ENCODE measurements at regions of chr1 and their contacts with region 1.

Region 1: GRCh38 chr1:204398217-204399081 is 13.2 kb downstream of the PPP1R15B start:
- DNase-seq: peak; percentile 67 to 78 (median 71)
- H3K4me3 ChIP-seq: no peak overlapping the region
- H3K4me3 Mint-ChIP-seq: no peak overlapping the region
- H3K27ac ChIP-seq: no peak overlapping the region
- H3K27ac Mint-ChIP-seq: peak overlapping the region; percentile 74 to 92 (median 89)
- H3K4me1 ChIP-seq: peaks cover under 1% of the 10 kb centered on the region
- H3K4me1 Mint-ChIP-seq: peaks cover 0 to 12% (median 4%) of the 10 kb centered on the region in 4 donors
- H3K27me3 ChIP-seq: no peaks in the 10 kb centered on the region
- H3K27me3 Mint-ChIP-seq: no peaks in the 10 kb centered on the region

Region 2: GRCh38 chr1:204162231-204163074 is 236.0 kb before region 1 on chr1:
- CTCF ChIA-PET with region 1: interaction called, 31 read pairs
- POLR2A ChIA-PET with region 1: interaction called, 4 read pairs
- intact Hi-C with region 1: loop called (anchors 1 kb)
- DNase-seq: peak; percentile 65 to 76 (median 68)
- H3K4me3 ChIP-seq: no peak overlapping the region
- H3K4me3 Mint-ChIP-seq: no peak overlapping the region
- H3K27ac ChIP-seq: no peak overlapping the region
- H3K27ac Mint-ChIP-seq: no peak overlapping the region
- H3K4me1 ChIP-seq: no peaks in the 10 kb centered on the region
- H3K4me1 Mint-ChIP-seq: no peaks in the 10 kb centered on the region
- H3K27me3 ChIP-seq: no peaks in the 10 kb centered on the region
- H3K27me3 Mint-ChIP-seq: peaks cover 2 to 4% of the 10 kb centered on the region in 2 donors

Region 3: GRCh38 chr1:204225841-204226735 is 172.4 kb before region 1 on chr1:
- CTCF ChIA-PET with region 1: no interaction called
- POLR2A ChIA-PET with region 1: no interaction called
- intact Hi-C with region 1: no loop called
- DNase-seq: no peak
- H3K4me3 ChIP-seq: no peak overlapping the region
- H3K4me3 Mint-ChIP-seq: no peak overlapping the region
- H3K27ac ChIP-seq: no peak overlapping the region
- H3K27ac Mint-ChIP-seq: no peak overlapping the region
- H3K4me1 ChIP-seq: no peaks in the 10 kb centered on the region
- H3K4me1 Mint-ChIP-seq: no peaks in the 10 kb centered on the region
- H3K27me3 ChIP-seq: no peaks in the 10 kb centered on the region
- H3K27me3 Mint-ChIP-seq: peaks cover under 1 to 2% of the 10 kb centered on the region in 2 donors

Region 4: DNA sequence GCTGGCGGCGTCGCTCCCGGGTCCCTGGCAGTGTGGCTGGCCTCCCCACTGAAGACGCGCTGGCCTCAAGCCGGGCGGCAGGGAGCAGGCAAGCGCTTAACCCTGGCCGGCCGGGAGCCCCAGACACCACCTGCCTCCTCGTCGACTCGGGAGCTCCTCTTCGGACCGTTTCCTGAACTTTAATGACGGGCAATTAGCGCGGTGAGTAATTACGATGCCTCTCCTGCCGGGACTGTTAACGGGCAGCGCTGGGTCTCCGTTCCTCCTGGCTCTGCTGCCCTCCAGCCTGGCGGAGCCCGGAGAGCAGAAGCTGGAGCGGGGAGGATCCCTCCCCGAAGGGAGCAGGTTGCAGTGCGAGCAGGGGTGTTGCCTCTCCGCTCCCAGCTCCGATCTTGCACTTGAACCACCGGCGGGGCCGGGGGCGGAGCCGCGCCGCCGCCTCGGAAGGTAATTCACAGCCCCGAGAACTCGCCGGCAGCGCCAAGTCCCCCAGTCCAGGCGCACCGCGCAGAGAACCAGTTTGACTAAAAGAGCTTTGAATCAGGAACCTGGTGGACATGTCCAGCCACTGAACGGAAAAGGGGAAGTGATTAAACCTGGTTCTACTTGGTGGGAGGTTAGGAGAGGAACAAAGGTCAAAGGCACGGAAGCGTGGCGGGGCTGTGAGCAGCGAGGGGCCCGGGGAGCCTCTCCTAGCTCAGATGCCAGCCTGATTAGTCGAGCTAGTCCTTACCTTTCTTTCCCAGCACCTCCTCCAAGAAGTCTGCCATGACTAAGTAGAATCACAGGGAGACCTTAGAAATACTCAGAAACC is 20.4 kb before region 1 on chr1:
- CTCF ChIA-PET with region 1: interaction called, 59 read pairs
- POLR2A ChIA-PET with region 1: interaction called, 5 read pairs
- intact Hi-C with region 1: loop called (anchors 2 kb)
- DNase-seq: peak; percentile 40 to 60 (median 43)
- H3K4me3 ChIP-seq: peak overlapping the region; percentile 51 to 63
- H3K4me3 Mint-ChIP-seq: peak overlapping the region; percentile 85 to 92 (median 88)
- H3K27ac ChIP-seq: no peak overlapping the region
- H3K27ac Mint-ChIP-seq: peak overlapping the region in 3 of 7 donors; percentile 9 to 71 (median 51)
- H3K4me1 ChIP-seq: peaks cover 11% of the 10 kb centered on the region
- H3K4me1 Mint-ChIP-seq: peaks cover 9 to 16% (median 11%) of the 10 kb centered on the region in 4 donors
- H3K27me3 ChIP-seq: peaks cover 26% of the 10 kb centered on the region
- H3K27me3 Mint-ChIP-seq: peaks cover 12 to 16% of the 10 kb centered on the region in 2 donors

Region 5: DNA sequence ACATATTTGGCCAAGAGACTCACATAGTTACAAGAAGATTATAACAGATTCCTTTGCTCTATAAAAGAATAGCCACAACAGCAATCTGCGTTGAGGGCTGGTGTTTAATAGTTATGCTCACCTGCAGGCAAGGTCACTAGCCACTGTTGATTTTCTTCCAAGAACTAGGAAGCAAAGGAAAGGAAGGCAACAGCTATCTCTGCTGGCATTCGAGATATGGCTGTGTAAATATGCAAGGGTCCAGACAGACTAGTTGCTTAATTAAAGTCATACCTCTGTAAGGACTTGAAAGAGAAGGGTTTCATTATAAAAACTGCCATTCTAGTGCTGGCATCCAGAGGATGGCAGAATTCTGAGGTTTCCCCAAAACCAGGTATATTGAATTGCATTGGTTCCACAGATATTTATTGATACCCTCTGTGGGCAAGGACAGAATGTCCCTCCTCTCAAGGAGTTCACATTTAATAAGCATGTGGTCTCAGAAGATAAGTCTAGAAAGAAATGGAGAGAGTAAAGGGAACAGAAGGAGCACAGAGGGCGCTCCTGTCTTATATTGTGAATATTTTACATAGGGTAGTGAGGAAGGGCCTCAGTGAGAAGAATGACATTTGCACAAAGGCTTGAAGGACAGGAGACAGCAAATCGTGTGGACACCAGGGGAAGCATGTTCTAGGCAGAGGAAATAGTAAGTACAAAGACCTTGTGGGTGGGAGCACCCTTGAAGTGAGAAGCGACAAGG is 15.1 kb before region 1 on chr1:
- CTCF ChIA-PET with region 1: interaction called, 59 read pairs
- POLR2A ChIA-PET with region 1: interaction called, 5 read pairs
- intact Hi-C with region 1: loop called (anchors 2 kb)
- DNase-seq: no peak
- H3K4me3 ChIP-seq: no peak overlapping the region
- H3K4me3 Mint-ChIP-seq: no peak overlapping the region
- H3K27ac ChIP-seq: no peak overlapping the region
- H3K27ac Mint-ChIP-seq: no peak overlapping the region
- H3K4me1 ChIP-seq: peaks cover 3% of the 10 kb centered on the region
- H3K4me1 Mint-ChIP-seq: peaks cover 3 to 7% (median 5%) of the 10 kb centered on the region in 4 donors
- H3K27me3 ChIP-seq: peaks cover 4% of the 10 kb centered on the region
- H3K27me3 Mint-ChIP-seq: peaks cover 3 to 11% of the 10 kb centered on the region in 2 donors

Region 6: GRCh38 chr1:204411451-204412204 is 13.2 kb after region 1 on chr1 and contains the start of gene PPP1R15B:
- CTCF ChIA-PET with region 1: interaction called, 64 read pairs
- POLR2A ChIA-PET with region 1: interaction called, 13 read pairs
- intact Hi-C with region 1: loop called (anchors 1 kb)
- DNase-seq: peak; percentile 98 to 99 (median 98)
- H3K4me3 ChIP-seq: peak within 1 kb of the TSS; percentile 67 to 99
- H3K4me3 Mint-ChIP-seq: peak within 1 kb of the TSS; percentile 98 to 99 (median 99)
- H3K27ac ChIP-seq: peak within 1 kb of the TSS; percentile 100
- H3K27ac Mint-ChIP-seq: peak within 1 kb of the TSS; percentile 99 to 100 (median 100)
- H3K4me1 ChIP-seq: peaks cover 7% of the 10 kb centered on the region
- H3K4me1 Mint-ChIP-seq: peaks cover 8 to 21% (median 13%) of the 10 kb centered on the region in 4 donors
- H3K27me3 ChIP-seq: no peaks in the 10 kb centered on the region
- H3K27me3 Mint-ChIP-seq: no peaks in the 10 kb centered on the region
- total RNA-seq, gene PPP1R15B: 78.0 to 81.1 TPM

Region 7: GRCh38 chr1:204530932-204531331 is 132.5 kb after region 1 on chr1:
- CTCF ChIA-PET with region 1: no interaction called
- POLR2A ChIA-PET with region 1: no interaction called
- intact Hi-C with region 1: no loop called
- DNase-seq: no peak
- H3K4me3 ChIP-seq: no peak overlapping the region
- H3K4me3 Mint-ChIP-seq: no peak overlapping the region
- H3K27ac ChIP-seq: no peak overlapping the region
- H3K27ac Mint-ChIP-seq: peak overlapping the region in 5 of 7 donors; percentile 1 to 85 (median 46)
- H3K4me1 ChIP-seq: no peaks in the 10 kb centered on the region
- H3K4me1 Mint-ChIP-seq: peaks cover 10 to 17% (median 13%) of the 10 kb centered on the region in 4 donors
- H3K27me3 ChIP-seq: no peaks in the 10 kb centered on the region
- H3K27me3 Mint-ChIP-seq: no peaks in the 10 kb centered on the region

Region 8: GRCh38 chr1:204600968-204601367 is 202.5 kb after region 1 on chr1:
- CTCF ChIA-PET with region 1: no interaction called
- POLR2A ChIA-PET with region 1: no interaction called
- intact Hi-C with region 1: no loop called
- DNase-seq: no peak
- H3K4me3 ChIP-seq: no peak overlapping the region
- H3K4me3 Mint-ChIP-seq: no peak overlapping the region
- H3K27ac ChIP-seq: no peak overlapping the region
- H3K27ac Mint-ChIP-seq: no peak overlapping the region
- H3K4me1 ChIP-seq: no peaks in the 10 kb centered on the region
- H3K4me1 Mint-ChIP-seq: no peaks in the 10 kb centered on the region
- H3K27me3 ChIP-seq: no peaks in the 10 kb centered on the region
- H3K27me3 Mint-ChIP-seq: no peaks in the 10 kb centered on the region